AG04450 (cell line): ENCODE measurements at regions of chr2 and their contacts with region 1.

Region 1: GRCh38 chr2:199704358-199705238 is 146.4 kb downstream of the FTCDNL1 start:
- DNase-seq: no peak
- H3K4me3 ChIP-seq: no peak overlapping the region
- H3K27ac ChIP-seq: no peak overlapping the region
- H3K27me3 ChIP-seq: no peaks in the 10 kb centered on the region
- CTCF ChIP-seq: peak; percentile 60

Region 2: DNA sequence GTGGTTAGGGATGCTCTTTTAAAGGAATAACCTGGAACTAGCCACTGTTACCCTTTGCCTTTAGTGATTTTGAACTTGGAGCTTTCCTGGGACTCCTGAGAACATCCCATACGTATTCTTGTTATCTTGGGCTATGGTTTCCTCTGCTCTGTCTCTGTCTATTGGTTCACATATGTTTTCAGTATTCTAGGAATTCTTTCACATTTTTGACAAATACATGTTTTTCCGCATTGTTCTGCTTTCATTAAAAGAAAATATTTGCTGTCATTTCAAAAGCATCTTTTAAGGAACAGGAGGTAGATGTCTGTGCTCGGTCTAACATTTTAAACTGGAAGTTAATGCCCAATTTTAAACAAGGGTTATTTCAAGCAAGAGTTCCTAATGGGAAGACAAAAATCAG is 68.6 kb before region 1 on chr2:
- CTCF ChIA-PET with region 1: no interaction called
- POLR2A ChIA-PET with region 1: no interaction called
- DNase-seq: no peak
- H3K4me3 ChIP-seq: no peak overlapping the region
- H3K27ac ChIP-seq: no peak overlapping the region
- H3K27me3 ChIP-seq: peaks cover 2% of the 10 kb centered on the region
- CTCF ChIP-seq: no peak

Region 3: DNA sequence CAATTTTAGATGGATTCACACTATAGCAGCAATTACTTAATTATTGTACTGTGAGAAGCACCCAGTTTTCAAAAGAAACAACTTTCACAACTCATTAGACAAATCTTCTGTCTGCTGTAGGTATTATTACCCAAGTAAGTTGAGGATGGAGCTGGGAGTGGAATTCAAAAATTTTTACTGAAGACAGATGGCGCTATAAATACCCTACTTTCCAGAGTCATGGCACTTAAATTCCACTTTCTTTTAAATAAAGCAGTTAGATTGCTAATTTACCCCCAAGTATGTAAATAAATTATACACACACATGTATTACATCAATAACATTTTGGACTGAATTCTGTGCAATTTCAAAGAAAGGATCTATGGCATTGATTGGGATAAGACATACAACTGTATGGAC is 20.4 kb before region 1 on chr2:
- CTCF ChIA-PET with region 1: no interaction called
- POLR2A ChIA-PET with region 1: no interaction called
- DNase-seq: no peak
- H3K4me3 ChIP-seq: no peak overlapping the region
- H3K27ac ChIP-seq: no peak overlapping the region
- H3K27me3 ChIP-seq: no peaks in the 10 kb centered on the region
- CTCF ChIP-seq: peak; percentile 25; the same call in 1 of the 2 replicates

Region 4: DNA sequence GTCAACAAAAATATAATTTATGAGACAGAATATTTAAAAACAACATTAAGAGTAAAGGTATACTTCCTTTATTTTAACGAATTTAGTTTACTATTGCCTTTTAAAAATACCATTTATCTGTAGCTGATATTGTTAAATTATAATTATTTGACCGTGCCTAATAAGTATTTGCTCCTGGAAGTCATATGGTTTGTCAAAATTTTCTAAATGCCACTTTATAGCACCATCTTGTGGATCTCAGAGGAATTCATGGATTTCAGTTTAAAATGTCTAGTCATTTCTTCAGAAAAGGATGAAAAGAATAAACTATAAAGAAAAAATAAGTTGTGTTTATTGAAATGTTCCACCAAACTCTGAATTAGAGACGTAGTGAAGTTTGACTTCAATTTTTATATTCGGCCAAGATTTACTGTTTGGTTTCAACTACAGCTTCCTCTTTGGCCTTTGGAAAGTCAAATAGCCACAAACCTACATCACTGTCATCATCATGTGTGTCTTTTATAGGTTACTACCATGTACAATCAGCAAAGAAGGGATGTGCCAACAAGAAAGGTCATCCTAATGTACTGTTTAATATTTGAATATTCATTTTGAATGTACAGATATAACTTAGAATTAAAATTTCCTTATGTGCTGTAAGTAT is 156.7 kb after region 1 on chr2:
- CTCF ChIA-PET with region 1: interaction called, 78 read pairs
- POLR2A ChIA-PET with region 1: no interaction called
- DNase-seq: no peak
- H3K4me3 ChIP-seq: no peak overlapping the region
- H3K27ac ChIP-seq: no peak overlapping the region
- H3K27me3 ChIP-seq: peaks cover 2% of the 10 kb centered on the region
- CTCF ChIP-seq: peak; percentile 65

Region 5: DNA sequence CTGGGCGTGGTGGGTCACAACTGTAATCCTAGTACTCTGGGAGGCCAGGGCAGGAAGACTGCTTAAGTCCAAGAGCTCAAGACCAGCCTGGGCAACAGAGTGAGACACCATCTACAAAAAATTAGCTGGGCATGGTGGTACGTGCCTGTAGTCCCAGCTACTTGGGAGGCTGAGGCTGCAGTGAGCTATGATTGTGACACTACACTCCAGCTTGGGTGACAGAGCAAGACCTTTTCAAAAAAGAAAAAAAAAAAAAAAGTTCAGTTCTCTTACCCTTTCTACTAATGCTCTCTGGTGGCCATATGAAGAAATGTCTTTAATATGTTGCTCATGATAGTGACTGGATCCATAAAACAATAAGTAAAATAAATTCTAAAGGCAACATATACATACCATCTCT is 235.8 kb after region 1 on chr2:
- CTCF ChIA-PET with region 1: interaction called, 38 read pairs
- POLR2A ChIA-PET with region 1: no interaction called
- DNase-seq: no peak
- H3K4me3 ChIP-seq: no peak overlapping the region
- H3K27ac ChIP-seq: no peak overlapping the region
- H3K27me3 ChIP-seq: no peaks in the 10 kb centered on the region
- CTCF ChIP-seq: peak; percentile 42